Right cardiac atrium (tissue), 5 donors: ENCODE measurements at regions of chr15 and their contacts with region 1.

Region 1: DNA sequence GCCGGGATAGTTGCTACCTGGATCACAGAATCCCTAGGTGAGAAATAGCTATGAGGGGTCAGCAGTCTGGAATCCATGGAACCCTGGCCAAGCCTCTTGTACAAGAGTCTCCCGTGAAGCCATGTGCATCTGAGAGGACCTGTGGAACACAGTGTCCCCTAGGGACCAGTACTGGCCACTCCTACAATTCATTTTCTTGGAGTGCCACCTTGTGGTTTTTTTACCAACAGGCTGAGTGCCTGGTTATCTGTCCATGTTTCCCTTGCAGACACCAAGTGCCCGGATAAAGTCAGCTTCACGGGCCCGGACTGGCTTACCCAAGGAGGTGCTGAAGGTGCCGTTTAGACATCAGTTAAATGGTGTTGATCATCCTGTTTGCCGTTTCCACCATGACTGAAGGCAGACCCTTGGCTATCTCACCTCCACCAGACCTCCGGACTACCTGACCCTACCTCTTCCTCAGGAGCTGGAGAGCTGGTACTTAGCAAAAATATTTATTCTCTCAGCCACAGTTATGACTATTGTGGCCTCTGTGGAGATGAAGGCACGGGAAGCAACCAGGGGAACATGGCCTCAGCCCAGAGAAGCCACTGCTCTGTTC is 93.9 kb downstream of the RBPMS2 start:
- DNase-seq: no peak
- ATAC-seq: peak; percentile 65 to 76
- H3K4me3 ChIP-seq: no peak overlapping the region
- H3K27ac ChIP-seq: no peak overlapping the region
- H3K4me1 ChIP-seq: peaks cover 3% of the 10 kb centered on the region
- H3K27me3 ChIP-seq: no peaks in the 10 kb centered on the region

Region 2: GRCh38 chr15:64209680-64210334 is 471.7 kb before region 1 on chr15:
- intact Hi-C with region 1: loop called in 1 of 4 experiments (anchors 10 kb)
- DNase-seq: no peak
- ATAC-seq: no peak
- H3K4me3 ChIP-seq: no peak overlapping the region
- H3K27ac ChIP-seq: no peak overlapping the region
- H3K4me1 ChIP-seq: no peaks in the 10 kb centered on the region
- H3K27me3 ChIP-seq: no peaks in the 10 kb centered on the region

Region 3: GRCh38 chr15:64369078-64369607 is 312.4 kb before region 1 on chr15:
- intact Hi-C with region 1: no loop called
- DNase-seq: no peak
- ATAC-seq: no peak
- H3K4me3 ChIP-seq: no peak overlapping the region
- H3K27ac ChIP-seq: no peak overlapping the region
- H3K4me1 ChIP-seq: no peaks in the 10 kb centered on the region
- H3K27me3 ChIP-seq: no peaks in the 10 kb centered on the region

Region 4: DNA sequence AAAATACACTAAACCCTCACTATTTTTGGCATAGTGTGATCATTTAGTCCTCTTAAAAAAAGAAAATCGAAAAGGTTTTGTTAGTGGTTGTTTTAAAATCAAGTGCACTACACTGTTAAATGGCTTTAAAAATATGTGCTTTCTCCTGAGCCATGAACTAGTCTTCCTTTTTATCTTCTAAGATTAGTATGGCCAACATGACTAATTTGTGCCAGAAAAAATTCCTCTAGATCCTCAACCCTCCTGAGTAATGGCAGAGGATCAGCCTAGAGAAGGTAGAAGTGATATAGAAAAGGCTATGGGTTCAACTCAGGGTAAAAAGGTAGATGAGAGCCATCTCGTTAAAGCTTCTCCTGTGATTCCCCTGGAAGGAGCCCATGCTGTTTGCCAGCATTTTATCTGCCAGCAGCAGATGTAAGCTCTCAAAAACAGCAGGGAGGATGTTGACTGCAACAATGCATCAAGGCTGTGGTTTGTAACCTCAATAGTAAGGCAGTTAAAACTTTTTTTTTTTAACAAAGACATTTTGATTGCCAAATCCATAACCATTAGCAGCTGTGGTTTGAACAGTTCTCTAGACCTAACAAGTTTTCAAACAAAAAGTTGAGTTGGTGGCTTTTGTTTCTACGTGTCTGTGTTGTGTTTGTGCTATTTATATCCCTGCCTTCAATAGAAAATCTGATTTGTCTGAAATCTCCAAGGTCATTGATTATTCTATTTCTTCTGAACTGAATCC is 251.4 kb before region 1 on chr15:
- intact Hi-C with region 1: loop called in 3 of 4 experiments (anchors 5 to 10 kb)
- DNase-seq: peak in 2 of 3 donors; percentile 33 to 61
- ATAC-seq: peak; percentile 68 to 72
- H3K4me3 ChIP-seq: no peak overlapping the region
- H3K27ac ChIP-seq: peak overlapping the region; percentile 75
- H3K4me1 ChIP-seq: no peaks in the 10 kb centered on the region
- H3K27me3 ChIP-seq: no peaks in the 10 kb centered on the region